Ascending aorta (tissue), 2 donors: ENCODE measurements at regions of chr4 and their contacts with region 1.

Region 1: GRCh38 chr4:173661001-173661400 is 131.0 kb upstream of the HAND2 start:
- DNase-seq: no peak
- H3K4me3 ChIP-seq: no peak overlapping the region
- H3K27ac ChIP-seq: no peak overlapping the region
- H3K4me1 ChIP-seq: no peaks in the 10 kb centered on the region
- H3K27me3 ChIP-seq: no peaks in the 10 kb centered on the region
- CTCF ChIP-seq: no peak

Region 2: GRCh38 chr4:172927096-172927814 is 733.7 kb before region 1 on chr4:
- intact Hi-C with region 1: no loop called
- DNase-seq: no peak
- H3K4me3 ChIP-seq: no peak overlapping the region
- H3K27ac ChIP-seq: no peak overlapping the region
- H3K4me1 ChIP-seq: no peaks in the 10 kb centered on the region
- H3K27me3 ChIP-seq: no peaks in the 10 kb centered on the region
- CTCF ChIP-seq: no peak

Region 3: DNA sequence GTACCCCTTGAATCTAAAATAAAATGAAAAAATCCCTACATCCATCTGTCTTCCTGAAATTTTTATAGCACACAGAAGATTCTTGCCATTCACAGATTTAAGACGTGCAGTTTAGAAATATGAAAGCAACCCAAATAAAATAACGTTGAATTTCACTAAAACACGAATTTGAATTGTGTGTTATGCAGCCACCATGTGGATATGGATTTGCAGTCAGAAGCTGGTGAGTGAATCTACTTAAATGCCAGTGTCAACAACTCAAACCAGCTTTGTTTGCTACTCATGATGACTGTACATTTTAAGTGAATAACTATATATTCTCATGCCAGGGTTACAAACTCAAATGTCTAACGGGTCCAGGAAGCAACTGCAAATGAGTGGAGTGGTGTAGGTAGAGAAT is 42.0 kb after region 1 on chr4:
- intact Hi-C with region 1: loop called (anchors 5 kb)
- DNase-seq: no peak
- H3K4me3 ChIP-seq: no peak overlapping the region
- H3K27ac ChIP-seq: peak overlapping the region in 1 of 2 donors; percentile 38
- H3K4me1 ChIP-seq: peaks cover 0 to 2% of the 10 kb centered on the region in 2 donors
- H3K27me3 ChIP-seq: no peaks in the 10 kb centered on the region
- CTCF ChIP-seq: no peak

Region 4: DNA sequence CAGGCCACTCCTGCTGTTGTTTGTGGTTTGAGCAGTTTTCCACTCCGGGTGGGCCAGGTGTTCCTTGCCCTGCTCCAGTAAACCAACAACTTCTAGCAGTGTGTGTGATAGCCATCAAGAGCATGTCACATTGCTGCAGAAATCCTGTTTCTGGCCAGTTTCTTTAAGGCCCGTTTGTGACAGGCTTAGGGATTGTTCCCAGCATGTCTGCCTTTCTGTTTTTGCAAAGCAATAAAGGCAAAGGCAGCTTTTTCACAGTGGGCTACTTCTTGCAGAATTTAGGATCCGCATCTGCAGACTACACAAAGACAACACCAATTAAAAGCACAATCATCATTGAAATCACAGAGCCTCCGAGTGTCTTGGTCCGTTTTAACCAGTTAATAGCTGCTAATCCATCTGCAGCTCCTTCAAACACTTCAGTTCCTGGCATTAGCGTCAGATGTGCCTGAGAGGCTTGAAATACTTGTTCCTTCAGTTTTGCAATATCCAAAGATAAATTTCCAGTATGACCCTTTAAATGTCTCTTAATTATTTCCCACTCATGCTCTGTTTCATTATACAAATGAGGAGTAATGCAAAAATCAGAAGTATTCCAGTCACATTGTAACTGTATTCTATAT is 1322.2 kb after region 1 on chr4:
- intact Hi-C with region 1: no loop called
- DNase-seq: no peak
- H3K4me3 ChIP-seq: no peak overlapping the region
- H3K27ac ChIP-seq: no peak overlapping the region
- H3K4me1 ChIP-seq: no peaks in the 10 kb centered on the region
- H3K27me3 ChIP-seq: no peaks in the 10 kb centered on the region
- CTCF ChIP-seq: no peak